Activated T-helper 2 cell treated with anti-CD3 and anti-CD28 coated beads, Interferon-gamma antibody, Interleukin-2, Interleukin-4, amounts not matched to agents 10 μg/mL and 5 μg/mL and 100 μg/mL, durations not matched to agents 14 hours and 24 hours and 36 hours (primary cell): ENCODE measurements at regions of chr1 and their contacts with region 1.

Region 1: GRCh38 chr1:9315411-9316079 is 22.9 kb downstream of the SPSB1 start:
- DNase-seq: peak; percentile 55
- H3K4me3 Mint-ChIP-seq: peak overlapping the region; percentile 57
- H3K27ac Mint-ChIP-seq: peak overlapping the region; percentile 89
- H3K4me1 Mint-ChIP-seq: peaks cover 35% of the 10 kb centered on the region
- H3K27me3 Mint-ChIP-seq: no peaks in the 10 kb centered on the region

Region 2: DNA sequence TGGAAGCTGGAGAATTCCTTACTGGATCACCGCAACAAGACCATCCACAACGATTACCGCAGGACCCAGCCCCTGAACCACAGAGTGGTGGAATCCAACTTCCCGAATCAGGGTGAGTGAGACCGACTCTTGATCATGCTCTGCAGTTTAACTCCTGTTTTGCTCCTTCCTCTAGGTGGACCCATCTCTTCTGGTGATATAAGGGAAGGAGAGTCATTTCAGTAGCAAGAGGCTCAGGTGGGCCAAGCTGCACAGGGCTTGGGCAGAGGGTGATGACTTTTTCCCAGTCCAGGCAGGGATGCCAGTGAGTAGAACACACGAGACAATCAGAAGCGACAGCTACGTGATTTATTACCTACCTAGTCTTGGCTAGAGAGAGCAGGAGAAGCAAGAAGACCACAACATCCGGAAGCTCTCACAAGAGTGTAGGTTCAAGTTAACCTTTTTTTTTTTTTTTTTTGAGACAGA is 344.6 kb before region 1 on chr1:
- intact Hi-C with region 1: no loop called
- DNase-seq: peak; percentile 45
- H3K4me3 Mint-ChIP-seq: peak overlapping the region; percentile 90
- H3K27ac Mint-ChIP-seq: peak overlapping the region; percentile 93
- H3K4me1 Mint-ChIP-seq: peaks cover 41% of the 10 kb centered on the region
- H3K27me3 Mint-ChIP-seq: no peaks in the 10 kb centered on the region

Region 3: DNA sequence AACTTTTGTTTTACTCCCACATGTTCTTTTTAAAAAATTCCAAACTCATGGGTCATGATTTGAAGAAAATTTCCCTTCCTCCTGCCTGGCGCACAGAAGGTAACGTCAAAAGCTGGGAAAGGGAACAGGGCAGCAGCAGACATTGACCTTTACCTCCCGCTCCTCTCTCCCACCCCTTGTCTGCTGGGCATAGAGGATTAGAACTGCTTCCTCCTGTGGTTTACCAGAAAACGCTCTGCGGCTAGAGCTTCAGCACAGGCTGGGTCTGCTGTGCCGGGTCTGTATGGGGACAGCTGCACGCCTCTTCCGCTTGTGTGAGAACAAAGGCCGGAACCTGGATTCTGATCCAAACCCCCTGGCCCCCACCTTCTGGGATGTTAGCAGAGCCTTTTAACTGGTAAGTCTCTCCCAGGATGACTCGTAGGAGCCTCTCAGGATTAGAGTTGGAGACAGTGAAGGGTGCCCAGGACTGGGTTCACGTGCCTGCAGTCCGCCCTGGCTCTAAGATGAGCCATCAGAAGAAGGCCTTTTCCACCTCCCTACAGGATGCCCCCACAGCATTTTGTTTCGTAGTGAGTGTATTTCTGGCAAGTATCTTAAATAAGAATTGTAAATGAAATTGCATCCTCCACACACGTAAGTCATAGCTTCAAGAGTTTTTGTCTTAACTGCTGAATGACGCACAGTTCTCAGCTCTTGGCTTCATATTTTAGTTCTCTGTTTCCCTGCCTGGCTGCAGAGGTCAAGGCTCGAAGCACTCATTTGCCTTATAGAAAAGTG is 75.7 kb before region 1 on chr1:
- intact Hi-C with region 1: loop called (anchors 2 kb)
- DNase-seq: peak; percentile 64
- H3K4me3 Mint-ChIP-seq: peak overlapping the region; percentile 66
- H3K27ac Mint-ChIP-seq: peak overlapping the region; percentile 91
- H3K4me1 Mint-ChIP-seq: peaks cover 67% of the 10 kb centered on the region
- H3K27me3 Mint-ChIP-seq: no peaks in the 10 kb centered on the region

Region 4: GRCh38 chr1:9275567-9276034 is 39.9 kb before region 1 on chr1:
- intact Hi-C with region 1: loop called (anchors 1 kb)
- DNase-seq: peak; percentile 58
- H3K4me3 Mint-ChIP-seq: no peak overlapping the region
- H3K27ac Mint-ChIP-seq: peak overlapping the region; percentile 25
- H3K4me1 Mint-ChIP-seq: peaks cover 33% of the 10 kb centered on the region
- H3K27me3 Mint-ChIP-seq: no peaks in the 10 kb centered on the region

Region 5: DNA sequence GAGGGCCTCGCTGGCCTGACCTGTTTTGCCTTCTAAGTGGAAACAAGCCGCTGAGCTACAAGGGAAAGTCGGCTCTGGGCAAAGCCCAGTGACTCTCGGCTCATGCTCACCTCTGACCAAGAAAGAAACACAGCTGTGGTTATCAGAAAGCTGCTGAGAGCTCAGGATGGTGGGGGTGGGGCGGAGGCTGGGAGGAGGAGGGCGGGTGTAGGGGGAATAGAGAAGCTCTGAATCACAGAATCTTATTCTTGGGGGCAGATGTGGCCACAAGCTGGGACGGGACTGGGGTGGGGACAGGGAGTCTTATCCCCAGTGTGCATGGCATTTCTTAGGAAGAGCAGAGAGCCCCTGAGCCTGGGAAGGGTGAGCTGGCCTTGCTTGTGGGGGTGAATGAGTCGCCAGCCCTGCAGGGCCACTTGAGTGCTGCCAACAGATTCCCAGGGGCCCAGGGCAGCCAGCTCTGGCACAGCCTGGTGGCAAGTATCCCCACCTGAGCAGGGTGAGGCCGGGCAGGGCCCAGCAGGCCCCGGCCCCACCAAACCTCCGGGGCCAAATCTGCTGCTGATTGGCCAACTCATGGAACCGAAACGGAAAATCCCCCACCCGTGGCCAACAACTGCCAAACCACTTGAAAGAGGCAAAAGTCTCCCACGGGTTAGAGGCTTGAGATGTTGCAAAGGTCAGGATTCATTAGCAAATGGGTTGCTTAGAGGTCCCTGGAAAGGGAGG is 97.8 kb after region 1 on chr1:
- intact Hi-C with region 1: loop called (anchors 1 kb)
- DNase-seq: peak; percentile 58
- H3K4me3 Mint-ChIP-seq: no peak overlapping the region
- H3K27ac Mint-ChIP-seq: peak overlapping the region; percentile 48
- H3K4me1 Mint-ChIP-seq: peaks cover 36% of the 10 kb centered on the region
- H3K27me3 Mint-ChIP-seq: peaks cover 4% of the 10 kb centered on the region

Region 6: GRCh38 chr1:9428601-9429341 is 113.2 kb after region 1 on chr1:
- intact Hi-C with region 1: loop called (anchors 1 kb)
- DNase-seq: peak; percentile 100
- H3K4me3 Mint-ChIP-seq: peak overlapping the region; percentile 91
- H3K27ac Mint-ChIP-seq: peak overlapping the region; percentile 95
- H3K4me1 Mint-ChIP-seq: peaks cover 38% of the 10 kb centered on the region
- H3K27me3 Mint-ChIP-seq: peaks cover 7% of the 10 kb centered on the region